ENCODE measurements at regions of chr2 and their contacts with region 1.

Region 1: DNA sequence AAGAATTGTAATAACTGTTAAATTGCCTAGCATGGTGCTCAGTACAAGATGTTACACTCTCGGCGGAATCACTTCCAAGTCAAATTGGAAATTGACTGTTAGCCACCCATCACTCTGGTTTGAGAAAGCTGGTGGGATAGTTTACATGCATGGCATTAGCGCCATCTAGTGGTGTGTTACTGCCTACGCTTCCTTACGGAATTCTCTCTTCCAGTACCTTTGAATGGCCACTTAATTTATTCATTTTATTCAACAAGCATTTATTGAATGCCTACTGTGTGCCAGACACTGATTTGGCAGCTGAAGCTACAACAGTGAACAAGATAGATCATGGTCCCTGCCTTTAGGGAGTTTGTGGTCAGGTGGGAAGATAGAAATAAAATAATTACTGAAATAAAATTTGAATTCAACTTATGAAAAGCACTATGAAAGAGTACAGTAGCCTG is 171.2 kb downstream of the TMEM247 start:
- DNase-seq: peak; percentile 77
- ATAC-seq: peak; percentile 69
- H3K4me3 Mint-ChIP-seq: no peak overlapping the region
- H3K27ac Mint-ChIP-seq: no peak overlapping the region
- H3K4me1 Mint-ChIP-seq: no peaks in the 10 kb centered on the region
- H3K27me3 Mint-ChIP-seq: no peaks in the 10 kb centered on the region

Region 2: DNA sequence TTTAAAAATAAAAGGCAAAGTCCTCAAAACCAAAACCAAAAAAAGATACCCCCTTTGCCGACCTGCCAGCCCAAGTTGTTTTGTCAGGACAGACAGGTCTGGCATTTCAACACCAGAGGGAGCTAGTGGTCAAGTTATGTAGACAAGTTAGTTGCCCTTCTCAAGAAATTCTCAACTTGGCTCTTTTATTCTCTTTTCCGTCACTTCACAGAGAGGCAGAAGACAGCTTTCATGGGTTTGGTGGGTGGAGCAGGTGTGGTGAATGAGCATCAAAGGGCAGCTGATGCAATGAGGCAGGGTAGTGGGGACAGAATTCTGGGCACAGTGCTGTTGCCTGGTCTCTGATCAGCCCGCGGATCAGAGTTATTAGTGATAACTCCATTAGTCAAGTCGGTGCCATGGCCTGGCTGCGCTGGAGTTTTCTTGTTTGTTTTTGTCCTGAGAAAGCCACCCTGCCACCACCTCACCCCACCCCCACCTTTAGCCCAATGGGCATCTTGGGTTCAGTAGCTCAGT is 657.0 kb before region 1 on chr2:
- CTCF ChIA-PET with region 1: interaction called, 4 read pairs
- POLR2A ChIA-PET with region 1: no interaction called
- intact Hi-C with region 1: loop called (anchors 1 to 5 kb)
- DNase-seq: peak; percentile 76
- ATAC-seq: peak; percentile 85
- H3K4me3 Mint-ChIP-seq: no peak overlapping the region
- H3K27ac Mint-ChIP-seq: no peak overlapping the region
- H3K4me1 Mint-ChIP-seq: peaks cover 8% of the 10 kb centered on the region
- H3K27me3 Mint-ChIP-seq: no peaks in the 10 kb centered on the region

Region 3: GRCh38 chr2:46010925-46011490 is 639.6 kb before region 1 on chr2:
- CTCF ChIA-PET with region 1: no interaction called
- POLR2A ChIA-PET with region 1: no interaction called
- intact Hi-C with region 1: loop called in 1 of 2 experiments (anchors 5 kb)
- DNase-seq: no peak
- ATAC-seq: peak; percentile 74
- H3K4me3 Mint-ChIP-seq: no peak overlapping the region
- H3K27ac Mint-ChIP-seq: no peak overlapping the region
- H3K4me1 Mint-ChIP-seq: no peaks in the 10 kb centered on the region
- H3K27me3 Mint-ChIP-seq: no peaks in the 10 kb centered on the region

Region 4: DNA sequence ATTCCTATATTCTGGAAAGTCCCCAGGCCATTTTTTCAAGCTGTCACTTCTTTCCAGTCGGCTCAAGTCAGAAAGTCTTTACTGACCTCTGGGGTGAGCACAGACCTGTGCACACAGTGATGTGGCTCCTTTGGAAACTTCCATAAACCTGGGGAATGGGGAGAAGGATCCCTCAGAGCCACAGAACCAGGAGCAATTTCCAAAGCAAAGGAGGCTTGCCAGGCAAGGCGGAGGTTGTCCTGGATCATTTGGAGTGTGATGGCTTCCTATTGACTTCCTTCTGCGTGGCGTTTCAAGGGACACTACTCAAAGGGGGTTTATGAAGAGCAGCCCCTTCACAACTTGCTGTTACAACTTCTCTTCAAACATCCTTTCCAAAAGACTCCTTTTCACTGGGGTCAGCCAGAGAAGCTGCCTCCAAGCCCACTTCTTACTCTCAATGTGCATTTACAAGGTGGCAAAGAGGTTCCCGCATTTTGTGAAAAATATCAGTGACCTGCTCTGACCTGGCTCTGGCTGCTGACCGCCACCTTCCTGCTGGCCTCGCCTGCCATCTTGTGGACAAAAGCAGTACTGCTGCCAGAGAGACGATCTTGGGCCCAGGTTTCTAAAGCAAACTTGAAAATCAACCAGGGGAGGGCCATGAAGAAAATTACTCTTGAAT is 189.4 kb before region 1 on chr2:
- CTCF ChIA-PET with region 1: interaction called, 12 read pairs
- POLR2A ChIA-PET with region 1: no interaction called
- intact Hi-C with region 1: no loop called
- DNase-seq: peak; percentile 83
- ATAC-seq: peak; percentile 58
- H3K4me3 Mint-ChIP-seq: no peak overlapping the region
- H3K27ac Mint-ChIP-seq: peak overlapping the region; percentile 0
- H3K4me1 Mint-ChIP-seq: peaks cover 2% of the 10 kb centered on the region
- H3K27me3 Mint-ChIP-seq: peaks cover 2% of the 10 kb centered on the region

Region 5: DNA sequence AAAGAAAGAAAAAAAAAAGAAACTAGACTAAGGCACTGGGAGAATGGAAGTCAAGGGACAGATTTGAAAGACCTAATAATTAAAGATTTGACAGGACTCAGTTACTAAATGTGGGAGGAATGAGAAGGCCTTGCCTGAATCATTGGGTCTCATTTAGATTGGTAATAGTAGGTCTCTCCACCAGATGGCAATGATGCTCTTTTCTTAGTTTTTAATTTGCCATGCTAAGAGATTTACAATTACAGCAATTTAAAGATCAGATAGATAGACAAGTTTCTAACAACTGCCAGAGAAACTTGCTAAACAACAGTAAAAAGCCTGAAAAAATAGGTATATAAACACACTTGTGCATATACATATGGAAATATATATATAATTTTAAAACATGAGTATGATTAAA is 18.2 kb before region 1 on chr2:
- CTCF ChIA-PET with region 1: interaction called, 24 read pairs
- POLR2A ChIA-PET with region 1: no interaction called
- intact Hi-C with region 1: loop called (anchors 1 kb)
- DNase-seq: no peak
- ATAC-seq: peak; percentile 47
- H3K4me3 Mint-ChIP-seq: no peak overlapping the region
- H3K27ac Mint-ChIP-seq: no peak overlapping the region
- H3K4me1 Mint-ChIP-seq: peaks cover 9% of the 10 kb centered on the region
- H3K27me3 Mint-ChIP-seq: no peaks in the 10 kb centered on the region

Region 6: DNA sequence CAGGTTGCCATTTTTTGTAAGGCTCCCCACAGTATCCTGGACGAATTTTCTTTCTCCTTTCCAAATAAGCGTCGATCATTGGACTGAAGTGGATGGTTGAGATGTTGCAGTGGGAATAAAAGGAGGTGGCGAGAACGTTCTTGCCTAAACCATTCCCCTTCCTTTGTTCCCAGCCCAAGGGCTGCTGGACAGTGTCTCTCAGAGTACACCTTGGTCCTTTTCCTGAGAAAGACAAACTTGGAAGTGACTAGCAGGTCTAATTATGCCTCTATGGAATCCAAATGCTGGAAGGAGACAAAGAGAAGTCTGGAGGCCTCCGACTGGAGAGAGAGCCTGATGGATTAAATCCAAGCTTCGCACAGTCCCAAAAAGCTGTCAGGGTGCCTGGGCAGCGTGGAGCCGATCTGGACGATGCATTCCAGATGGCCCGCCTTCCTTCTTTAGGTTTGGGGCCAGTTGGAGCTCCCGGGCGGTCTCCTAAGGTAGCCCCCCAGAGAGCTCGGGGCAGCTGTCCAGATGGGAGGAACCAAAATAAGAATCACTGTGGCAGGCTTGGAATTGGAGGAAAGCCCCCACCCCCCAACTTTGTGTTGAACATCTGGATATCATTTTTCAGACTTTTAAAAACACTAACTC is 15.6 kb after region 1 on chr2:
- CTCF ChIA-PET with region 1: interaction called, 11 read pairs
- POLR2A ChIA-PET with region 1: no interaction called
- intact Hi-C with region 1: no loop called
- DNase-seq: no peak
- ATAC-seq: no peak
- H3K4me3 Mint-ChIP-seq: no peak overlapping the region
- H3K27ac Mint-ChIP-seq: no peak overlapping the region
- H3K4me1 Mint-ChIP-seq: peaks cover 7% of the 10 kb centered on the region
- H3K27me3 Mint-ChIP-seq: peaks cover 21% of the 10 kb centered on the region

Region 7: GRCh38 chr2:46887028-46887885 is 236.7 kb after region 1 on chr2:
- CTCF ChIA-PET with region 1: interaction called, 9 read pairs
- POLR2A ChIA-PET with region 1: no interaction called
- intact Hi-C with region 1: loop called (anchors 2 to 5 kb)
- DNase-seq: no peak
- ATAC-seq: peak; percentile 27
- H3K4me3 Mint-ChIP-seq: no peak overlapping the region
- H3K27ac Mint-ChIP-seq: peak overlapping the region; percentile 15
- H3K4me1 Mint-ChIP-seq: peaks cover 12% of the 10 kb centered on the region
- H3K27me3 Mint-ChIP-seq: peaks cover 5% of the 10 kb centered on the region

Region 8: GRCh38 chr2:48471048-48471474 is 1820.5 kb after region 1 on chr2:
- CTCF ChIA-PET with region 1: no interaction called
- POLR2A ChIA-PET with region 1: no interaction called
- intact Hi-C with region 1: no loop called
- DNase-seq: no peak
- ATAC-seq: no peak
- H3K4me3 Mint-ChIP-seq: no peak overlapping the region
- H3K27ac Mint-ChIP-seq: no peak overlapping the region
- H3K4me1 Mint-ChIP-seq: no peaks in the 10 kb centered on the region
- H3K27me3 Mint-ChIP-seq: no peaks in the 10 kb centered on the region

Measured in activated CD4-positive, alpha-beta T cell treated with anti-CD3 and anti-CD28 coated beads for 36 hours (primary cell).